GM18951 (cell line): ENCODE measurements at regions of chr3 and their contacts with region 1.

Region 1: GRCh38 chr3:138686771-138687221 is 78.2 kb downstream of the FAIM start:
- POLR2A ChIP-seq: no peak

Region 2: DNA sequence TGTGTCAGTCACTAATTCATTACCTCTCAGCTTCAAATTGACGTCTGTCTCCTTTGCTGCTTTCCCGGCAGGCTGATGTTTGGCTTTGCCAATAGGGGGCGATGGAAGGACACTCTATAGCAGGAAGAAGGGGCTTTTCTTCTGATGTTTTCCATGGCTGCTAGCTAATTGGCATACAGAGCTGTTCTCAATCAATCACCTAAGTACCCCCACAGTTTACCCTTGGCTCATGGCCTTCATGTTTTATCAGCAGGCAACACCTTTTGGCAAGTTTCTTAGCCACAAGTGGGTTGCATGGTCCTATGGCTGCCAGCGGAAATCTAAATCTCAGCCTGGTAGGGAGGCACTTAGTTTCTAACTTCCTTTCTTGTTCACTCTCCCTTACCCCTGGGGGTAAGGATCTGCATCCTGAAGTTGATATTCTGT is 207.3 kb before region 1 on chr3:
- in situ Hi-C with region 1: loop called (anchors 25 kb)
- POLR2A ChIP-seq: no peak

Region 3: DNA sequence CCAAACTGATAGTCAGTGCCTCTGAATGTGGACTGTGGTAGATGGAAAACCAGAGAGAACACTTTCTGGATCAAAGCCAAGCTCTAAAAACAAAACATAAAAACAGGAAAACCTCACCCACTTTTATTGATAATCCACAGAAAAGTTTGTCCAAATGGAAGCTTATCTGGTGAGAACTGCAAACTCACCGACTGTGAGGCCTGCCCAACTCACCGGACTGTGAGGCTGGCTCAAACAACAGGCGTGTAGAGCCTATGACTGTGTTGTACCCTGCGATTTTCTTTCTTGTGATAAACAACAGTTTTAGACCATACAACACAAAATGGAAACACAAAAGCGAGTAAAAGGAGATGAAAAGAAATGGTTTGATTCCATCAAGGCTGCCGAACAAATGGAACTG is 350.7 kb after region 1 on chr3:
- in situ Hi-C with region 1: no loop called
- POLR2A ChIP-seq: no peak